SK-N-SH (cell line): ENCODE measurements at regions of chr16 and their contacts with region 1.

Region 1: GRCh38 chr16:67499106-67499505 is 15.8 kb upstream of the AGRP start:
- DNase-seq: no peak
- H3K4me3 ChIP-seq: no peak overlapping the region
- H3K27ac ChIP-seq: no peak overlapping the region
- H3K4me1 ChIP-seq: no peaks in the 10 kb centered on the region
- H3K27me3 ChIP-seq: no peaks in the 10 kb centered on the region
- CTCF ChIP-seq: no peak
- EP300 ChIP-seq: no peak
- RAD21 ChIP-seq: no peak

Region 2: DNA sequence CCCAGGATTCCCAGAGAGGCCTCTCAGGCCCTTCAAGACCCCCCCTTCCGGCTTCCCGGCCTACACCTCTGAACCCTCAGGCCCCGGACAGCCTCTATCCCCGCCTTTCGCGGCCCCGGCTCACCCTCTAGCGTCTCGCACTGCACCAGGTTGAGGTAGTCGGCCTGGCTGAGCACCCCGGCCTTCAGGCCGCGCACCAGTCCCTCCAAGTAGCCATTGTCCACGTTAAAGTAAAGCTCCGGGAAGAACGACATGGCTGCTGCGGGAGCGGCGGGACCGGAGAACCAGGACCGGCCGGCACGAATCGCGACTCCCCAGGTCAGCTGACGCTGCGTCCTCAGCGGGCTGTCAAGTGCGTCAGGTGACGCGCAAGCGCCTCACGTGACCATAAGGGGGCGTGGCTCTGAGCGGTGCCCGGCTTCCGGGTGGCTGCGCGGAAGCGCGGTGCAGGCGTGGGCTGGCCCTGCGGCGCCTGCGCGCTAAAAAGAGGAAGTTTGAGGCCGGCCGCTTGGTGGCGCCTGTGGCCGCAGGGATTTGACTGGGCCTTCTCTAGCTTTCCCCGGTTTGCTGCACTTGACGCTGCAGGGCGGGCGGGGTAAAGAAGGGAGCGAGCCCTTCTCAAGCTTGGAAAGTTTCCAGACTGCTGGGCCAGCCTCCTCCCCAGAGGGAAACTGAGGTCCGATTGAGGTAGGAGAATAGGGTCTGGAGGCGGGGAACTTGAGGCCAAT is 18.1 kb before region 1 on chr16 and contains the start of gene ATP6V0D1:
- CTCF ChIA-PET with region 1: interaction called, 45 read pairs
- POLR2A ChIA-PET with region 1: no interaction called
- DNase-seq: peak; percentile 98
- H3K4me3 ChIP-seq: peak within 1 kb of the TSS; percentile 80 to 100
- H3K27ac ChIP-seq: peak within 1 kb of the TSS; percentile 89 to 91
- H3K4me1 ChIP-seq: peaks cover 6 to 19% of the 10 kb centered on the region in 2 experiments; a peak in 1 of 4 replicates
- H3K27me3 ChIP-seq: no peaks in the 10 kb centered on the region
- CTCF ChIP-seq: peak; percentile 79
- EP300 ChIP-seq: no peak
- RAD21 ChIP-seq: peak; percentile 68
- polyA plus RNA-seq, gene ATP6V0D1: 111 and 135 TPM in 2 replicates

Region 3: DNA sequence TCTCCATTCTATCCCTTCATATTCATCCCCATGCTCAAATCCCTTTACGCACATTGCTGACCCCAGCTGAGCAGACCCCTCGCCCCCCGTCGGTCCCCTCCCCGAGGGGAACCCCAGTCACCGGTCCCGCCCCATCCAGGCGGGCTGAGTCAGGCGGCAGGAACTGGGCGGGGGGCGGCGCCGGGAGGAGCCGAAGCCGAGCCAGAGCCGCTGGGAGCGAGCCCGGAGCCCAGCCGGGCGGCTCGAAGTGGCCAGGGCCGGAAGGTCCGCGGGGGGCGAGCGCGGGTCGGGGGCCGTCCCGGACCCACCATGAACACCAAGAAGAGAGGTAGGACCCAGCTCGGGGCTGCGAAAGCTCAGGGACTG is 38.1 kb after region 1 on chr16:
- CTCF ChIA-PET with region 1: interaction called, 11 read pairs
- POLR2A ChIA-PET with region 1: no interaction called
- DNase-seq: peak; percentile 85
- H3K4me3 ChIP-seq: peak overlapping the region; percentile 52 to 71
- H3K27ac ChIP-seq: peak overlapping the region in 1 of 2 experiments; percentile 47; a peak in 2 of 4 replicates
- H3K4me1 ChIP-seq: peaks cover 0 to 9% of the 10 kb centered on the region in 2 experiments; a peak in 1 of 4 replicates
- H3K27me3 ChIP-seq: no peaks in the 10 kb centered on the region
- CTCF ChIP-seq: no peak
- EP300 ChIP-seq: no peak
- RAD21 ChIP-seq: no peak